HCT116 (cell line): ENCODE measurements at regions of chr11 and their contacts with region 1.

Region 1: DNA sequence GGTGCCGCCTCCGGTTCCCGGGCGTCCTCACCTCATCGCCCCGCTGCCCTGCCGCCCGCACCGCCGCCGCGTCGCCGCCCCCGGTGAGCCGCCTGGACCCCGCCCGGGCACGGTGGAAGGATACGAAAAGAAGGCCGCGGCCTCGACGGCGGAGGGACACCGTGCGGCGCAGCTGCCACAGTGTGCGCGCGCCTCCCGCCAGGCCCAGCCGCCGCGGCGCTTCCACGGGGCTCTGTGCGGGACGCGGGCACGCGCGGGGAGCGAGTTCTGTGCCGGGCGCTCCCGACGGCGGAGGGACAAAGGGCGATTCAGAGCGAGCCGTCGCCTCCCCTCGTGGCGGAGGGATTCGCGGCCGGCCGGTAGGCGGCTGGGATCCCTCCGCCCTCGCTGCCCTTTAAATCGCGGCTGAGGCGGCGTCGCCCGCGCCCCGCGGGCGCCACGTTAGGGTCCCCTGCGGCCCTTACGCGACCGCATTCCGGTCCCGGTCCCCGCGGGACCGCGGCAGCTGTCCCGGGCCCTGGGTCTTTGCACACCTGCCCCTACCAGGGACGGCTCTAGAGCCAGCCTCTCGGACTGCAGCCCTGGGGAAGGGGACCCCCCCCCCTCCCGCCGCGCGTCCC is 569 bp upstream of the KMT5B start:
- DNase-seq: peak; percentile 86
- ATAC-seq: peak; percentile 44
- H3K4me3 ChIP-seq: peak overlapping the region; percentile 58 to 78
- H3K27ac ChIP-seq: peak overlapping the region; percentile 99
- H3K4me1 ChIP-seq: peaks cover 8 to 38% of the 10 kb centered on the region in 2 experiments; a peak in 3 of 4 replicates
- H3K27me3 ChIP-seq: no peaks in the 10 kb centered on the region
- CTCF ChIP-seq: no peak
- POLR2A ChIP-seq: peak; percentile 99
- RAD21 ChIP-seq: no peak

Region 2: GRCh38 chr11:68199295-68199987 is 14.2 kb before region 1 on chr11:
- CTCF ChIA-PET with region 1: interaction called, 11 read pairs
- POLR2A ChIA-PET with region 1: no interaction called
- RAD21 ChIA-PET with region 1: no interaction called
- intact Hi-C with region 1: no loop called
- DNase-seq: no peak
- ATAC-seq: no peak
- H3K4me3 ChIP-seq: no peak overlapping the region
- H3K27ac ChIP-seq: no peak overlapping the region
- H3K4me1 ChIP-seq: no peaks in the 10 kb centered on the region
- H3K27me3 ChIP-seq: no peaks in the 10 kb centered on the region
- CTCF ChIP-seq: no peak
- POLR2A ChIP-seq: no peak
- RAD21 ChIP-seq: no peak

Region 3: GRCh38 chr11:68235650-68236049 is 22.0 kb after region 1 on chr11:
- CTCF ChIA-PET with region 1: interaction called, 12 read pairs
- POLR2A ChIA-PET with region 1: interaction called, 3 read pairs
- RAD21 ChIA-PET with region 1: no interaction called
- intact Hi-C with region 1: no loop called
- DNase-seq: no peak
- ATAC-seq: no peak
- H3K4me3 ChIP-seq: no peak overlapping the region
- H3K27ac ChIP-seq: no peak overlapping the region
- H3K4me1 ChIP-seq: peaks cover 0 to 4% of the 10 kb centered on the region in 2 experiments; a peak in 1 of 4 replicates
- H3K27me3 ChIP-seq: no peaks in the 10 kb centered on the region
- CTCF ChIP-seq: no peak
- POLR2A ChIP-seq: no peak
- RAD21 ChIP-seq: no peak

Region 4: DNA sequence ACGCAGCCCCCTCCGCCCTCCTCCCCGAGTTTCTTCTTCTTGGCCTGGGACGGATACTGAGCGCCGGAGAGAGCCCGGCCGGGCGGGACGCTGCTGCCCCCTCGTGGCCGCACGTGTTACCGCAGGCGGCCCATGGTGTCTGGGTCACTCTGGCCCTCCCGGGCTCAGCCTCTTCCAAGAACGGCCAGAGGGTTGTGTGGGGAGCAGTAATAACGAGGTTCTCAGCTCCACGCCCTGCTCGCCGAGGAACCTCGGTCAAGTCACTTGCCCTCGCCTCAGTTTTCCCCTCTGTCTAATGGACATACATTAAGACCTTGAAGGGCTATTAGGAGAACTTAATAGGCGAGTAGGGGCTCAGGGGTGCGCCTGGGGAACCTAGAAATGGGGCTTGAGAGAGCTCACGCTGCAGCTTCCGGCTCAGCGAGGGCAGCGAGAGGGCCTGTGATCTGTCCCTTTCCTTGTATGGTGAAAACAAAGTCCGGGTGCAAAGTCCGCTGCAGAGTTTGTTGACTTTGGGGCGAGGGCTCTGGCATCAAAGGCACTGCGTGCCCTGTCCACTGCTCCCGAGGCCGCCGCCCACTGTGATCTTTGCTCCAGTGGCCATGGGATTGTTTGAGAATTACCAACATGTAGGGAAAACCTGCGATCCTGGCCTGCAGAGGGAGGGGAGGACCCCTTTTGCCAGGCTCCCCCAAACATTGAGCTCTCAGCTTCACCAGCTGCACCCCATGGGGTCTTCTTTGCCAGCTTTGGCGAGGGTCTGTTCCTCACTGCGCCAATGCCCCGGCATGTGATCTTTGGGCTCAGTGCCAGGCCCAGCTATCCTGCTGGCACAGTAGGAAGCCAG is 84.4 kb after region 1 on chr11:
- CTCF ChIA-PET with region 1: interaction called, 6 read pairs
- POLR2A ChIA-PET with region 1: interaction called, 3 read pairs
- RAD21 ChIA-PET with region 1: no interaction called
- intact Hi-C with region 1: loop called (anchors 2 kb)
- DNase-seq: peak; percentile 52
- ATAC-seq: peak; percentile 97
- H3K4me3 ChIP-seq: peak overlapping the region in 1 of 2 experiments; percentile 19; a peak in 2 of 4 replicates
- H3K27ac ChIP-seq: no peak overlapping the region
- H3K4me1 ChIP-seq: peaks cover 18 to 35% of the 10 kb centered on the region in 2 experiments
- H3K27me3 ChIP-seq: no peaks in the 10 kb centered on the region
- CTCF ChIP-seq: peak; percentile 94 to 97 (median 96)
- POLR2A ChIP-seq: no peak
- RAD21 ChIP-seq: peak; percentile 98

Region 5: GRCh38 chr11:68398995-68399851 is 185.6 kb after region 1 on chr11:
- CTCF ChIA-PET with region 1: no interaction called
- POLR2A ChIA-PET with region 1: no interaction called
- RAD21 ChIA-PET with region 1: no interaction called
- intact Hi-C with region 1: no loop called
- DNase-seq: no peak
- ATAC-seq: no peak
- H3K4me3 ChIP-seq: no peak overlapping the region
- H3K27ac ChIP-seq: no peak overlapping the region
- H3K4me1 ChIP-seq: no peaks in the 10 kb centered on the region
- H3K27me3 ChIP-seq: no peaks in the 10 kb centered on the region
- CTCF ChIP-seq: no peak
- POLR2A ChIP-seq: no peak
- RAD21 ChIP-seq: no peak